ENCODE measurements at regions of chr6 and their contacts with region 1.

Region 1: DNA sequence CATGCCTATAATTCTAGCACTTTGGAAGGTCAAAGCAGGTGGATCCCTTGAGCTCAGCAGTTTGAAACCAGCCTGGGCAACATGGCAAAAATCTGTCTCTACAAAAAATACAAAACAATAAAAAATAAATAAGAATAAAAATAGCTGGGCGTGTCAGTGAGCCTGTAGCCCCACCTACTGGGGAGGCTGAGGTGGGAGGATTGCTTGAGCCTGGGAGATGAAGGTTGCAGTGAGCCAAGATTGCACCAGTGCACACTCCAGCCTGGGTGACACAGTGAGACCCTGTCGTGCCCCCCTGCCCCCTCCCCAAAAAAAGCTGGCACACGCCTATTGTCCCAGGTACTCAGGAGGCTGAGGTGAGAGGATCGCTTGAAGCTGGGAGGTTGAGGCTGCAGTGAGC is 35.1 kb upstream of the SRPK1 start:
- DNase-seq: peak; percentile 35
- H3K4me3 Mint-ChIP-seq: no peak overlapping the region
- H3K27ac Mint-ChIP-seq: no peak overlapping the region
- H3K4me1 Mint-ChIP-seq: peaks cover 14% of the 10 kb centered on the region
- H3K27me3 Mint-ChIP-seq: peaks cover 8% of the 10 kb centered on the region

Region 2: DNA sequence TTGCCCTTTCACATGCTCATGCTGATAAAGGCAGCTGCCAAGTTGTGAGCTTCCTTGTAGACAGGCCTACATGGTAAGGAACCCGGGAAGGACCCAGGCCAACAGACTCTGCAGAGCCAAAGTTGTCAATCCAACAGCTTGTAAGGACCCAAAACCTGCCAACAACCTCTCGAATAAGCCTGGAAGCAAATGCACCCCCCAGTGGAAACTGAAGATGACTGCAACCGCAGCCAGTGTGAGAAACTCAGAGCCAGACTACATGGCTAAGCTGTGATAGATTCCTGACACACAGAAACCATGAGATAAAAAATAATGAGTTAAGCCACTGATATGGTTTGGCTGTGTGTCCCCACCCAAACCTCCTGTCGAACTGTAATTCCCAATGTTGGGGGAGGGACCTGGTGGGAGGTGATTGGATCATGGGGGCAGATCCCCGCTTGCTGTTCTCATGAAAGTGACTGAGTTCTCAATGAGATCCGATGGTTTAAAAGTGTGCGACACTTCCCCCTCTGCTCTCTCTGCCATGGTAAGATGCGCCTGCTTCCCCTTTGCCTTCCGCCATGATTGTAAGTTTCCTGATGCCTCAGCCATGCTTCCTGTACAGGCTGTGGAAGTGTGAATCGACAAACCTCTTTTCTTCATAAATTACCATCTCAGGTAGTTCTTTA is 198.4 kb before region 1 on chr6:
- CTCF ChIA-PET with region 1: interaction called, 3 read pairs
- POLR2A ChIA-PET with region 1: no interaction called
- intact Hi-C with region 1: loop called (anchors 10 kb)
- DNase-seq: peak; percentile 31
- H3K4me3 Mint-ChIP-seq: no peak overlapping the region
- H3K27ac Mint-ChIP-seq: no peak overlapping the region
- H3K4me1 Mint-ChIP-seq: no peaks in the 10 kb centered on the region
- H3K27me3 Mint-ChIP-seq: peaks cover 25% of the 10 kb centered on the region